Activated T-helper 2 cell treated with anti-CD3 and anti-CD28 coated beads, Interferon-gamma antibody, Interleukin-2, Interleukin-4, amounts not matched to agents 10 μg/mL and 5 μg/mL and 100 μg/mL, durations not matched to agents 14 hours and 24 hours and 36 hours (primary cell): ENCODE measurements at regions of chr10 and their contacts with region 1.

Region 1: DNA sequence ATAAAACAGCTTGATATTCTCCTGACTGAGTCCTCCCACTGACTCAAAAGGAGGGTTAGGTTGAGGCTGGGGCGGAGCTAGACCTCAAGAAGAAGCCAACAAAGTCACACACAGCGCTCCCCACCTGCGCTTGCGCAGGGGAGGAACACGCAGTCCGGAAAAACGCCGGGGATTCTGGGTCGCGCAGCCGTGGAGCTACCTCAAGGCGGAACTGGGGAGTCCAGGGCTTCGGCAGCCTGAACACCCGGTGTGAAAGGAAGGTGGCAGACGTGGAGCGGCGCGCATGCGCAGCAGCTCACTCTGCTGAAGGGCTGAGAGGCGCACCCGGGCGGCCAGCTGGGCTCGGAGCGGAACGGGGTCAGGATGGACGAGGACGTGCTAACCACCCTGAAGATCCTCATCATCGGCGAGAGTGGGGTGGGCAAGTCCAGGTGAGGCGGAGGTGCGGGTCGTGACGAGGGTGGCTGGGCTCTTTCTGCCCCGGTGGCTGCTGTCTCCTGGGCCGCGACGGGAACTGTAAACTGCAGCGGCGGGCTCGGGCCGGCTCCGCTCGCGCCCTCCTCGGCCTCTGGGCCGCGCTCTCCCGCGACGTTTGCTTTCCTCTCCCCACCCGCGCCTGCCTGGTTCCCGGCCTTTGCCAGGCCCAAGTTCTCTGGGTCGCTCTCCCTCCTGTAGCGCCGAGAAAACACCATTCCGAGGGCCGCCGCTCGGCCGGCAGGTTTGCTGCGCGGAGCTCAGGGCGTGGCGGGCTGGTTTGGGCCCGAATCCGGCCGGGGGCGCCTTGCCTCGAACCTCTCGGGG is at the start of gene RAB18:
- DNase-seq: peak; percentile 98
- H3K4me3 Mint-ChIP-seq: peak within 1 kb of the TSS; percentile 93
- H3K27ac Mint-ChIP-seq: peak within 1 kb of the TSS; percentile 91
- H3K4me1 Mint-ChIP-seq: peaks cover 46% of the 10 kb centered on the region
- H3K27me3 Mint-ChIP-seq: no peaks in the 10 kb centered on the region
- total RNA-seq, gene RAB18: 55.9 and 56.4 TPM in 2 replicates

Region 2: DNA sequence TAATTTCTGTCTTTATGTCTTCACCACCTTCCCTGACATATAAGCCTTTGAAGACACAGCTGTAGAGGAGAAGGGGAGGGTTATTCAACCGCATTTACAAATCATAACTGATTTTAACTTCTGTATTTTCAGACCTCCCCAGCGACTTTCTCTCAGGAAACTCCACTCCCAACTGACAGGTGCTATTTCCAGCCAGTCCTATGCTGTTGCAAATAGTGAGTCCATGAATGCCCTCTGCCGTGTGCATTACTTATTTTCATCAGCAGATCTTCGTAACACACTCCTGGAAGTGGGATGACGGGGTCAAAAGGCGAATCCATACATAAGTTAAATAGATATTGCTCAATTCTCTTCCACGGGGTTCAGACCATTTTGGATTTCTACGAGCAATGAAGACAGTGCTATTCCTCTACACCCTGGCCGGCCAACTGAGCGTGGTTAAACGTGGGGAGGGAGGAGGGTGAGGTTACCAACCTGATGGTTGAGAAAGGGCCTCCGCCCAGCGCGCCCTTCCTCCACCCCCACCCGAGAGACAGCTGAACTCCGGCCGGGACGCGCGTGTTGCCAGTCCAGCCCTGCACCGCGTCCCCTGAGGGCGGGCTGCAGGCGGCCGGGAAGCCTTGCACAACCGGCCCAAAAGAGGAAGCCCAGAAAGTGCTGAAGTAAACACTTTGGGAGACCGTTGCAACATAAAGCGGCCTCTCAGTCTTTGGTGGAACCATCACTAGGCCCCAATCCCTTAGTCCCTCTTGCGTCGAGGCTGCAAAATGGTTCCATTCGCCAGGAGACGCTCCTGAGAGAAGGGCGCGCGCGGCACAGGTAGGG is 1066.4 kb before region 1 on chr10 and contains the start of gene APBB1IP:
- intact Hi-C with region 1: loop called (anchors 10 kb)
- DNase-seq: peak; percentile 52
- H3K4me3 Mint-ChIP-seq: peak within 1 kb of the TSS; percentile 92
- H3K27ac Mint-ChIP-seq: peak within 1 kb of the TSS; percentile 90
- H3K4me1 Mint-ChIP-seq: peaks cover 39% of the 10 kb centered on the region
- H3K27me3 Mint-ChIP-seq: no peaks in the 10 kb centered on the region
- total RNA-seq, gene APBB1IP: 45.2 and 47.4 TPM in 2 replicates

Region 3: GRCh38 chr10:27529010-27529783 is 25.0 kb after region 1 on chr10:
- intact Hi-C with region 1: loop called (anchors 2 kb)
- DNase-seq: no peak
- H3K4me3 Mint-ChIP-seq: peak overlapping the region; percentile 11
- H3K27ac Mint-ChIP-seq: peak overlapping the region; percentile 51
- H3K4me1 Mint-ChIP-seq: peaks cover 50% of the 10 kb centered on the region
- H3K27me3 Mint-ChIP-seq: no peaks in the 10 kb centered on the region